ENCODE measurements at regions of chr1 and their contacts with region 1.

Region 1: GRCh38 chr1:28736450-28737306 is at the start of gene YTHDF2:
- DNase-seq: peak; percentile 73 to 95
- H3K4me3 ChIP-seq: peak within 1 kb of the TSS; percentile 82
- H3K27ac ChIP-seq: peak within 1 kb of the TSS; percentile 74
- H3K4me1 ChIP-seq: peaks cover 25% of the 10 kb centered on the region
- H3K27me3 ChIP-seq: no peaks in the 10 kb centered on the region
- CTCF ChIP-seq: peak; percentile 82
- total RNA-seq, gene YTHDF2: 46.4 and 63.4 TPM in 2 replicates

Region 2: DNA sequence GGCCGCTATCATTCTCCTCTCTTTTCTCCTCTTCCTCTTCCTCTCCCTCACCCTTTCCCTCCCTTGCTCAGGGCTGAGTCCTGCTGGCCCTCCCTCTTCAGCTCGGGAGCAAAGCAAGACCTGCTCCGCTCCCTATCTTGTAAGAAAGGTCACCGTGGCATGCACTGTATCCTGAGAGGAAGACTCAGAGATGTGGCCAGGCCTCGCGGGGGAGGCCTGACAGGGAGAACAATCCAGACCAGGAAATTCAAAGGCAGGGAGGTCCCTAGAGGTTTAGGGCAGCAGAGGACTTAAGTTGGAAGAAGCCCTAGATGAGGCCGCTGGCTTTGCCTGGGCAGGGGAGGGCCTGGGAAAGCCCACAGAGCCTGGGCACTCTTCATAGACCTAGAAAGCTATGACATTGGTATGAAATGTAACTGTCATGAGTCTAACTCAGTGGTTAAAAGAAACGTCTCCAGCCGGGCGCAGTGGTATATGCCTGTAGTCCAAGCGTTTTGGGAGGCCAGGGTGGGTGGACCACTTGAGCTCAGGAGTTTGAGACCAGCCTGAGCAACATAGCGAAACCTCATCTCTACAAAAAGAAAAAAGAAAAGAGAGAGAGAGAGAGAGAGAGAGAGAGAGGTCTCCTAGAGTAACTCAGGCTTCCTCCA is 545.6 kb before region 1 on chr1:
- CTCF ChIA-PET with region 1: interaction called, 5 read pairs
- POLR2A ChIA-PET with region 1: interaction called, 30 read pairs
- intact Hi-C with region 1: no loop called
- DNase-seq: no peak
- H3K4me3 ChIP-seq: peak overlapping the region; percentile 10; the same call in 1 of the 2 replicates
- H3K27ac ChIP-seq: peak overlapping the region; percentile 80
- H3K4me1 ChIP-seq: peaks cover 37% of the 10 kb centered on the region
- H3K27me3 ChIP-seq: no peaks in the 10 kb centered on the region
- CTCF ChIP-seq: no peak

Region 3: GRCh38 chr1:28437934-28438699 is 298.6 kb before region 1 on chr1:
- CTCF ChIA-PET with region 1: no interaction called
- POLR2A ChIA-PET with region 1: interaction called, 26 read pairs
- intact Hi-C with region 1: no loop called
- DNase-seq: peak; percentile 87 to 93
- H3K4me3 ChIP-seq: peak overlapping the region; percentile 56
- H3K27ac ChIP-seq: peak overlapping the region; percentile 79
- H3K4me1 ChIP-seq: peaks cover 37% of the 10 kb centered on the region
- H3K27me3 ChIP-seq: no peaks in the 10 kb centered on the region
- CTCF ChIP-seq: no peak

Region 4: DNA sequence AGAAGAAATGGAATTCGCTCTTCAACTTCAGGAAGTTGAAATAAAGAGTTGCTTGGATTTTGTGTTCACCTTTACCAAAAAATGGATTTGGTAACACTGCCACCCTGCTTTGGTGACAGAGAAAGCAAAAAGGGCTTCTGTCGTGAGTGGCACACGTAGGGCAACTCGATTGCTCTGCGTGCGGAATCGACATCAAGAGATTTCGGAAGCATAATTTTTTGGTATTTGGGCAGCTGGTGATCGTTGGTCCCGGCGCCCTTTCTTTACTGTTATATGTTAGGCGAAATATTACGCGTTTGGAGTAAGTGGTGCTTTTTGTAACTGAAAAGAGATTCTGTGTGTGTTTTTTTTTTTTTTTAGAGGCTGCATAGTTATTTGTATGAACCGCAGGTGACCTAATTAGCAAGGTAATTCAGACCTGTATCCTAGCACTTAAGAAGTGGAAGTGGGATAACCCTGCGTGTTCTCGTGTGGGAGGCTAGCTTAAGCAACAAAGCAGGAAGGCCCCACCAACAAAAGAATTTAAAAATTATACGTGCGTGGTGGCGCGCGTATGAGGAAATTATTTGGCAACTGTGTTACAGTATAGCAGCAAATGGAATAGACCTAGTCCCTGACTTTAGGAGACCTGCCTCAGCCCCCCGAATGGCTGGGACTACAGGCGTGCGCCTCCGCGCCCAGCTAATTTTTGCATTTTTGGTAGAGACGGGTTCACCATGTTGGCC is 88.0 kb before region 1 on chr1 and contains the start of gene RNU11:
- CTCF ChIA-PET with region 1: interaction called, 14 read pairs
- POLR2A ChIA-PET with region 1: interaction called, 33 read pairs
- intact Hi-C with region 1: loop called (anchors 1 kb)
- DNase-seq: peak; percentile 85 to 95
- H3K4me3 ChIP-seq: peak within 1 kb of the TSS; percentile 52; the same call in 1 of the 2 replicates
- H3K27ac ChIP-seq: peak within 1 kb of the TSS; percentile 96
- H3K4me1 ChIP-seq: peaks cover 24% of the 10 kb centered on the region
- H3K27me3 ChIP-seq: no peaks in the 10 kb centered on the region
- CTCF ChIP-seq: no peak
- total RNA-seq, gene RNU11: not detected in 2 replicates

Region 5: DNA sequence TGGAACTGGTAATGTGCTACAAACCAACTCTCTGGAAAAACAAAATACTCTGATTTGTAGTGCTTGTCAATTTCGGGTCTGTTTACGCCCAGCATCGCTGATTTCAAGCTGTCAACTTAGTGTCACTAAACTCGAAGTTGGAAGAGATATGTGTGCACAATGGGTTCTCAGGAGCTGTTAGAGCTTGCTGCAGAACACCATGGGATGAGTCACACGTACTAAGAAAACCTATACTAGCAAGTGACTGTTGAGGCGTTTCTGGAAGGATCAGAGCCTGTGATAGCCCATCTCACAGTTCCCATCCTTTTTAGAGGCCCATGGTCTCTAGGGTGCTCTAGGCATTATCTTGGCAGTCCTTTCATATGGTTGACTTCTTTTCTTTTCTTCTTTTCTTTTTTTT is 53.8 kb before region 1 on chr1:
- CTCF ChIA-PET with region 1: no interaction called
- POLR2A ChIA-PET with region 1: no interaction called
- intact Hi-C with region 1: no loop called
- DNase-seq: no peak
- H3K4me3 ChIP-seq: no peak overlapping the region
- H3K27ac ChIP-seq: no peak overlapping the region
- H3K4me1 ChIP-seq: no peaks in the 10 kb centered on the region
- H3K27me3 ChIP-seq: no peaks in the 10 kb centered on the region
- CTCF ChIP-seq: no peak

Region 6: GRCh38 chr1:28751315-28752060 is 14.8 kb after region 1 on chr1:
- CTCF ChIA-PET with region 1: interaction called, 10 read pairs
- POLR2A ChIA-PET with region 1: interaction called, 8 read pairs
- intact Hi-C with region 1: no loop called
- DNase-seq: no peak
- H3K4me3 ChIP-seq: no peak overlapping the region
- H3K27ac ChIP-seq: no peak overlapping the region
- H3K4me1 ChIP-seq: peaks cover 15% of the 10 kb centered on the region
- H3K27me3 ChIP-seq: no peaks in the 10 kb centered on the region
- CTCF ChIP-seq: no peak

Region 7: DNA sequence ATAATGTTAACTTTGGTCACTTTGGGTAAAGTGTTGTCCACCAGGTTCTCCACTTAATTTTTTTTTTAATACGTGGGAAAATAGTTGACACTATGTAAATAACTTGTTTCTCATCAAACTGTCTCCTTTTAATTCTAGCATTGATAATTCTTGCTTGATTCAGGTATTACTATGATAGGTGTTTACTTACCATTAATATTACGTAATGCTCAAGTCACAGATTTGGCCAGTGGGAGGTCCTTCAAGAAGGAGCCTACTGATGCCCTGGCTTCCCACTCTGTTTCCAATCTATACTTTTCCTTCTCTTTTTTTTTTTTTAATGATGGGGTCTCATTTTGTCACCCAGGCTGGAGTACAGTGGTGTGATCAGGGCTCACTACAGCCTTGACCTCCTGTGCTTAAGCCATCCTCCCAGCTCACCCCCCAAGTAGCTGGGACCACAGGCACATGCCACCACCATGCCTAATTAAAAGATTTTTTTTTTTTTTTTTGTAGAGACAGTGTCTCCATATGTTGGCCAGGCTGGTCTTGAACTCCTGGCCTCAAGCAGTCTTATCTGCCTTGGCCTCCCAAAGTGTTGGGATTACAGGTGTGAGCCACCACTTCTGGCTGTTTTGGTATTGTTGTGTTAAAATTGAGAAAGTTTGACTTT is 30.0 kb after region 1 on chr1:
- CTCF ChIA-PET with region 1: no interaction called
- POLR2A ChIA-PET with region 1: no interaction called
- intact Hi-C with region 1: no loop called
- DNase-seq: no peak
- H3K4me3 ChIP-seq: no peak overlapping the region
- H3K27ac ChIP-seq: no peak overlapping the region
- H3K4me1 ChIP-seq: no peaks in the 10 kb centered on the region
- H3K27me3 ChIP-seq: no peaks in the 10 kb centered on the region
- CTCF ChIP-seq: no peak

Region 8: DNA sequence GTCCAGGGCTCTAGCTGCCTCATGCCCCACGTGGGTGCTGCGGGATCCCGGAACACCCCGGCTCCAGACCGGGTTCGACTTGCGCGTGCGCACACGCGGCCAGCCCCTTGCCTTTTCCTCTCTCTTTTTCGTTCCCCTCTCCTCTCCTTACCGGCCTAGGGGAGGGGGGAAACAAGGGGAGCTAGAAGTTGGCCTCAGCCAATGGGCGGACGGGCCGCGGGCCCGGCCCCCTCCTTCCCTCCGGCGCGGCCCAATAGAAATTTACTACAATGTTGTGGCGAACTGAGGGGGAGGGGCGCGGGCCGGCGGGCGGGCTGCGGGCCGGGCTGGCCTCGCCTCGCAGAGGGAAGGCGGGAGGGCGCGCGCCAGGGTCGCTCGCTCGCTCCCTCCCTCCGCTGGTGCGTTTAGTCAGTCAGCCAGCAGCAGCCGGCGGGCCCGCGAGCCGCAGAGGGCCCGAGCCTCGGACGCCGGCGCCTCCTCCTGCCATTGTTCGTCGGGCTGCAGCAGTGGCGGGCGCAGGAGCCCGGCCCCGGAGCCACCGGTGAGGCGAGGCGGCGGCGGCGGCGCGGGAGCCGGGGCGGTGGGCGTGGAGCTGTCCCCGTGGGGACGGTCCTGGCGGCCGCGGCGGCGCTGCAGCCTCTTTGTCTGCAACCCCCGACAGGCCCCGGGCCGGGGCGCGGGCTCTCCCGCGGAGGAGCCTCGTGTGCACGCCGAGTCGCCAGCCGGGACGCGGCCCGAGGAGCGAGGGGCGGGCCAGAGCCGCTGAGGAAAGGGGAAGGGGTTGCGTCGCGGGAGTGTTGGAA is 177.8 kb after region 1 on chr1 and contains the start of gene EPB41:
- CTCF ChIA-PET with region 1: interaction called, 15 read pairs
- POLR2A ChIA-PET with region 1: no interaction called
- intact Hi-C with region 1: no loop called
- DNase-seq: peak; percentile 73 to 90
- H3K4me3 ChIP-seq: peak within 1 kb of the TSS; percentile 54
- H3K27ac ChIP-seq: no peak within 1 kb of the TSS
- H3K4me1 ChIP-seq: 0 out of 2 replicates have a peak, but pooled peaks cover 5% of the 10 kb centered on the region
- H3K27me3 ChIP-seq: no peaks in the 10 kb centered on the region
- CTCF ChIP-seq: no peak
- total RNA-seq, gene EPB41: 36.0 and 42.2 TPM in 2 replicates